IMR-90 (cell line): ENCODE measurements at regions of chr14 and their contacts with region 1.

Region 1: DNA sequence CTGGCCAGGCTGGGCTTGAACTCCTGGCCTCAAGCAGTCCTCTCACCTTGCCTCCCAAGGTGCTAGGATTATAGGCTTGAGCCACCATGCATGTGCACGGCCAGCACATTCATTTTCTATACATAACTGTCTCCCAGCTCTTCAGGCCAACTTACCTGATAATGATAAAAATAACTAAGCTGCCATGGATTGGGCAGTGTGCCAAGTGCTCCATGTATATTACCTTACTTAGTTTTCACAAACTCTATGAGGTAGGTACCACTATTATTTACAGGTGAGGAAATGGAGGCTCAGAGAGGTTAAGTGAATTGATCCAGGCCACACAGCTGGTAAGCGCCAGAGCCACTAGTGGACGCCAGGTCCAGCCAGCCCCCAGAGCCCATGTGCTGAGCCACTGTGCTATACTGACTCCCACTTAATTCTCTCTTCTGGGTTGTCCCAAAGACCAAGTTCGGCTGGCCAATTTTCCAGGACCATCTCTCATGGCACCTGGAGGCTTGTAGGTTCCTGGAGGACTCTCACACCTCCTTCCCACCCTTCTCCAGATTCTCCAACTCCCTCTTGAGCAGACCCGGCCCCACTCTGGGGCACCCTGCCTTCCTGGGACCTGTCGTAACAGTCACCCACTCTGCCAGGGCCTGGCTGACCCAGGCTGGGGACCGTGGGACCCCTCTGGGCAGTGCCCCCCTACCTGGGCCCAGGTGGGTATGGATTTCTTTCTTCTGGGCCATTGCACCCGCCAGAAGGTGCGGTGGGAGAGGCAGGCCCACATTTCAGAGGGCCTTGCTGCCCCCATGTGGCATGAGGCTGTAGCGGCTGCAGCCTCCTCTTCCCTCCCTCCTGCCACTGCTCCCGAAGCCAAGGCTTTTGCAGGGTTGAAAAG is 30.2 kb upstream of the CIPC start:
- DNase-seq: peak; percentile 57
- ATAC-seq: peak; percentile 85
- H3K4me3 ChIP-seq: no peak overlapping the region
- H3K27ac ChIP-seq: no peak overlapping the region
- H3K4me1 ChIP-seq: peaks cover 3% of the 10 kb centered on the region
- H3K27me3 ChIP-seq: no peaks in the 10 kb centered on the region
- CTCF ChIP-seq: peak; percentile 91
- POLR2A ChIP-seq: no peak
- RAD21 ChIP-seq: peak; percentile 98

Region 2: GRCh38 chr14:76752744-76753143 is 315.1 kb before region 1 on chr14:
- CTCF ChIA-PET with region 1: no interaction called
- POLR2A ChIA-PET with region 1: no interaction called
- dilution Hi-C with region 1: no loop called
- in situ Hi-C with region 1: no loop called
- intact Hi-C with region 1: no loop called
- DNase-seq: no peak
- ATAC-seq: no peak
- H3K4me3 ChIP-seq: no peak overlapping the region
- H3K27ac ChIP-seq: no peak overlapping the region
- H3K4me1 ChIP-seq: no peaks in the 10 kb centered on the region
- H3K27me3 ChIP-seq: no peaks in the 10 kb centered on the region; the same call in 1 of the 2 replicates
- CTCF ChIP-seq: no peak
- POLR2A ChIP-seq: no peak
- RAD21 ChIP-seq: no peak

Region 3: DNA sequence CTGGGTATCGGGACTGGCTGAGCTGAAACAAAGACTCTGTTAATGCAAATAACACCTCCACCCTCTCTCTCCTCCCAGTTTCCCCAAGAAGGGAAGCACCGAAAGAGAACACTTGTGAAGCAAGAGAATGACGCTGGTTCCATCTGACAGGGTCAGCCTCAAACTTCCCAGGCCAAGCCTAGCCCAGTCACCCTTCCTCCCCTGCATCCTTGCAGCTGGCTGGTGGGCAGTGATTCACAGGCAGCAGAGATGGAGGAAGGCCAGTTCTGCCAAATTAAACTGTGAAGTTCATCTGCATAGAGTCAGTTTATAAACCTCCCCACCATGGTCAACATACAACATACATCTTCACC is 238.9 kb before region 1 on chr14:
- CTCF ChIA-PET with region 1: interaction called, 12 read pairs
- POLR2A ChIA-PET with region 1: no interaction called
- dilution Hi-C with region 1: no loop called
- in situ Hi-C with region 1: no loop called
- intact Hi-C with region 1: no loop called
- DNase-seq: no peak
- ATAC-seq: no peak
- H3K4me3 ChIP-seq: no peak overlapping the region
- H3K27ac ChIP-seq: no peak overlapping the region
- H3K4me1 ChIP-seq: no peaks in the 10 kb centered on the region
- H3K27me3 ChIP-seq: peaks cover 20% of the 10 kb centered on the region
- CTCF ChIP-seq: no peak
- POLR2A ChIP-seq: no peak
- RAD21 ChIP-seq: no peak

Region 4: GRCh38 chr14:77028384-77029231 is 39.3 kb before region 1 on chr14 and contains the start of gene IRF2BPL:
- CTCF ChIA-PET with region 1: interaction called, 8 read pairs
- POLR2A ChIA-PET with region 1: interaction called, 3 read pairs
- dilution Hi-C with region 1: no loop called
- in situ Hi-C with region 1: no loop called
- intact Hi-C with region 1: loop called (anchors 1 kb)
- DNase-seq: peak; percentile 99
- ATAC-seq: peak; percentile 63
- H3K4me3 ChIP-seq: peak within 1 kb of the TSS; percentile 97
- H3K27ac ChIP-seq: peak within 1 kb of the TSS; percentile 99
- H3K4me1 ChIP-seq: peaks cover 13% of the 10 kb centered on the region
- H3K27me3 ChIP-seq: no peaks in the 10 kb centered on the region
- CTCF ChIP-seq: no peak
- POLR2A ChIP-seq: peak; percentile 80
- RAD21 ChIP-seq: peak; percentile 15; the same call in 1 of the 2 replicates
- total RNA-seq, gene IRF2BPL: 6.3 and 8.9 TPM in 2 replicates

Region 5: GRCh38 chr14:77082356-77082755 is 14.5 kb after region 1 on chr14:
- CTCF ChIA-PET with region 1: interaction called, 12 read pairs
- POLR2A ChIA-PET with region 1: no interaction called
- dilution Hi-C with region 1: no loop called
- in situ Hi-C with region 1: no loop called
- intact Hi-C with region 1: no loop called
- DNase-seq: no peak
- ATAC-seq: no peak
- H3K4me3 ChIP-seq: no peak overlapping the region
- H3K27ac ChIP-seq: no peak overlapping the region
- H3K4me1 ChIP-seq: no peaks in the 10 kb centered on the region
- H3K27me3 ChIP-seq: peaks cover 11% of the 10 kb centered on the region
- CTCF ChIP-seq: no peak
- POLR2A ChIP-seq: no peak
- RAD21 ChIP-seq: no peak

Region 6: DNA sequence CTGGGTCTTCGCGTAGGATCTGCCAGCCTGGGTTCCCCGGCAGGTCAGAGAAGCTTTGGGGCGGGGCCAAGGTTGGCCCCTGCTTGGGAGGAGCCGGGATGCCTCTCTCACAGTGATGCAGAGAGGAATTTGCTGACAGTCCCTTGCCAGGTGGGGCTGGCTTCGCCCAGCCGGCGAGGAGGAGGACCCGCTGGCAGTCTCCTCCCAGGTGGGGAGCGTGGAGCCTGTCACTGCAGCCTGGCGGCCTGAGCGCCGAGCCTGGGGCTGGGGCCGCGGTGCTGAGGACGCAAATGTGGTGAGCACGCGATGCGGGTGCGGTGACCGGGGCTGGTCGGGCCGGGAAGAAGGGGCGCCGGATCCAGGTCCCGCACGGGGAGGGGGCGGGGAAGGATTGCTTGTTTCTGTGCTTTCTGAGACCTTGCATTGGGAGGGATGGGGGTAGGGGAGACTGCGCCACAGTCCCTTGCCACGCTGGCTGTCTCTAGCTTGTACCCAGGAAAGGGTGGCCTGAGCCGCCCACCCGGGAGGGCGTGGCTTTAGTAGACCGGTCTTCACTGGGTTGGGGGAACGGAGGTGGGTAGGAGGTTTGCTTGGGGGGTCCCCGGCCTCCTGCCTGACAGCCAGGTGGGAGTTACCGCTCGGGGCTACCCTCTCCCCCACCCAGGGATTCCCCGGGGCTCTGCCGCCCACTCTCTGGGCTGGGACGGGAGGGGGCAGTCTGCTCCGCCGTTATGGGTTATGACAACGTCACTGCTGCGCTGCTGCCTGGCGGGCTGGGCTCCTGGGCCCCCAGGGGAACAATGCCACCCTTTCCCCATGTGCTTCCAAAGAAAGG is 113.9 kb after region 1 on chr14 and contains the start of gene TMEM63C:
- CTCF ChIA-PET with region 1: no interaction called
- POLR2A ChIA-PET with region 1: no interaction called
- dilution Hi-C with region 1: no loop called
- in situ Hi-C with region 1: no loop called
- intact Hi-C with region 1: no loop called
- DNase-seq: no peak
- ATAC-seq: 0 out of 2 replicates have a peak, but pooled peaks have one; percentile 17
- H3K4me3 ChIP-seq: no peak within 1 kb of the TSS
- H3K27ac ChIP-seq: no peak within 1 kb of the TSS
- H3K4me1 ChIP-seq: no peaks in the 10 kb centered on the region
- H3K27me3 ChIP-seq: peaks cover 37% of the 10 kb centered on the region
- CTCF ChIP-seq: no peak
- POLR2A ChIP-seq: no peak
- RAD21 ChIP-seq: no peak
- total RNA-seq, gene TMEM63C: under 0.01 TPM in 1 of 2 replicates, not detected in the other

Region 7: DNA sequence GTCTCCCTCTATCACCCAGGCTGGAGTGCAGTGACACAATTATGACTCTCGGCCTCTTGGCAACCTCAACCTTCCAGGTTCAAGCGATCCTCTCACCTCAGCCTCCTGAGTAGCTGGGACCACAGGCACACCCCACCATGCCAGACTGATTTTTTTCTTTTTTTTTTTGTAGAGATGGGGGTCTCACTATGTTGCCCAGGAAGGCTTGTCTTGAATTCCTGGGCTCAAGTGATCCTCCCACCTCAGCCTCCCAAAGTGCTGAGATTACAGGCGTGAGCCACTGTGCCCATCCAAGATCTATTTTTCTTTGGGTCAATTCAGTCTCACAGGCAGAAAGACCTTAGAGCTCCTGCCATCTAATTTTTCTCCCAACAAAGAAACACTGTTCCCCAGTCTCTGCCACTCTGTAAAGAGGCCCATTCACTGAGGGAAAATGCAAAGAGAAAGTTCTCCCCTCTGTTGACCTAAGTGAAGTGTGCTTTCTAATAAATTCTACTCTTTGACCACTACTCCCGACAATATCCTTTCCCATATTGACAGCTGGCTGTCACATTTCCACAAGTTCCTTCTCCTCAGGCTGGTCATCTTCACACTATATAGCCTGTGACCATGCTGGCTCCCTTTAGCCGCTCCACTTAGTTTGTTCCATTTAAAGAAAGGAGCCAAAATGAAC is 285.7 kb after region 1 on chr14:
- CTCF ChIA-PET with region 1: no interaction called
- POLR2A ChIA-PET with region 1: no interaction called
- dilution Hi-C with region 1: no loop called
- in situ Hi-C with region 1: no loop called
- intact Hi-C with region 1: no loop called
- DNase-seq: no peak
- ATAC-seq: no peak
- H3K4me3 ChIP-seq: no peak overlapping the region
- H3K27ac ChIP-seq: no peak overlapping the region
- H3K4me1 ChIP-seq: no peaks in the 10 kb centered on the region
- H3K27me3 ChIP-seq: no peaks in the 10 kb centered on the region
- CTCF ChIP-seq: no peak
- POLR2A ChIP-seq: no peak
- RAD21 ChIP-seq: no peak